ENCODE measurements at regions of chr15 and their contacts with region 1.

Region 1: GRCh38 chr15:62795171-62795570 is 247.4 kb upstream of the TPM1 start:
- DNase-seq: no peak
- H3K4me3 ChIP-seq: no peak overlapping the region
- H3K27ac ChIP-seq: no peak overlapping the region
- H3K4me1 ChIP-seq: no peaks in the 10 kb centered on the region; a peak in 1 of 4 replicates
- H3K27me3 ChIP-seq: no peaks in the 10 kb centered on the region
- CTCF ChIP-seq: no peak
- EP300 ChIP-seq: no peak
- RAD21 ChIP-seq: no peak

Region 2: GRCh38 chr15:62782039-62782791 is 13.0 kb before region 1 on chr15:
- CTCF ChIA-PET with region 1: interaction called, 10 read pairs
- POLR2A ChIA-PET with region 1: no interaction called
- DNase-seq: peak; percentile 83
- H3K4me3 ChIP-seq: no peak overlapping the region
- H3K27ac ChIP-seq: peak overlapping the region; percentile 76 to 96
- H3K4me1 ChIP-seq: peaks cover 22 to 51% of the 10 kb centered on the region in 2 experiments
- H3K27me3 ChIP-seq: no peaks in the 10 kb centered on the region
- CTCF ChIP-seq: peak; percentile 83
- EP300 ChIP-seq: no peak
- RAD21 ChIP-seq: peak; percentile 99

Measured in SK-N-SH (cell line).